PC-9 (cell line): ENCODE measurements at regions of chr11 and their contacts with region 1.

Region 1: DNA sequence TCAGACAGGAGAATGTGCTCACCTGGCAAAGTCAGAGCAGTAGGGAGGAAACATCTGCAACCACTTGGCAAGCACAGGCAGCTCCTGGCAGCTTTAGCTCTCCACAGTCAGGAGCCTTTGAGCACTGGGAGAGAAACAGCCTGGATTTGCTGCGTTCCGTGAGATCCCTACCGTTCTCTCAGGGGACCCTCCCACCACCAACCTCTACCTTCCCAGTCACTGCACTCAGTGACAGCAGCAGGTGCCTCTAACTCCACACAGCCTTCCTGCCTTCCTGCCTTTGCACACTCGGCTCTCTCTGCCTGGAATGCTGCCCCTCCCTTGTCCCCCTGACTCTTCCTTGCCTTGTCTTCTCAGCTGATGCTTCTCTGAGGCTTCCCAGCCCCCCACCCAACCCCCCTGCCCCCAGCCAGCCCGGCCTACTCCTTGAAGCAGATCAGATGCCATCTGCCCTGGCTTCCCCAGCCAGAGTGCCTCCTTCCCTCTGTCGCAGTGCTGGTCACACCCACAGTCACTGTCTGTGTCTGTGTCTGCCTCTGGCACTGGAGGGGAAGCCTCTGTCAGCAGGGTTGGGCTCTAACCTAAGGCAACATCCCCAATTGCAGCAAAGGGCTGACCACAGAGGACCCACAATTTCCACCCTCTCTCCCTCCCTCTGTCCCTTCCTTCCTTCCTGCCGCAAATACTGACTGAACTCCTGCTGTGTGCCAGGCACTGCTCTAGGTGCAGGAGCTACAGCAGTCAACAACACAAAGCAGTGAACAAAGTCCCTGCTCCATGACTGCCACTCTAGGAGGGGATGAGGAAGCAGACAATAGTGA is 14.9 kb upstream of the TSKU start:
- DNase-seq: peak in 1 of 2 experiments; percentile 57
- H3K4me3 ChIP-seq: peak overlapping the region; percentile 69
- H3K27ac ChIP-seq: peak overlapping the region; percentile 99
- H3K4me1 ChIP-seq: peaks cover 83% of the 10 kb centered on the region
- H3K27me3 ChIP-seq: no peaks in the 10 kb centered on the region
- CTCF ChIP-seq: no peak

Region 2: GRCh38 chr11:76782526-76783293 is 14.4 kb after region 1 on chr11:
- CTCF ChIA-PET with region 1: interaction called, 5 read pairs
- POLR2A ChIA-PET with region 1: interaction called, 24 read pairs
- intact Hi-C with region 1: loop called (anchors 1 kb)
- DNase-seq: peak; percentile 77 to 94
- H3K4me3 ChIP-seq: peak overlapping the region; percentile 94
- H3K27ac ChIP-seq: peak overlapping the region; percentile 85
- H3K4me1 ChIP-seq: peaks cover 40% of the 10 kb centered on the region
- H3K27me3 ChIP-seq: no peaks in the 10 kb centered on the region
- CTCF ChIP-seq: no peak

Region 3: DNA sequence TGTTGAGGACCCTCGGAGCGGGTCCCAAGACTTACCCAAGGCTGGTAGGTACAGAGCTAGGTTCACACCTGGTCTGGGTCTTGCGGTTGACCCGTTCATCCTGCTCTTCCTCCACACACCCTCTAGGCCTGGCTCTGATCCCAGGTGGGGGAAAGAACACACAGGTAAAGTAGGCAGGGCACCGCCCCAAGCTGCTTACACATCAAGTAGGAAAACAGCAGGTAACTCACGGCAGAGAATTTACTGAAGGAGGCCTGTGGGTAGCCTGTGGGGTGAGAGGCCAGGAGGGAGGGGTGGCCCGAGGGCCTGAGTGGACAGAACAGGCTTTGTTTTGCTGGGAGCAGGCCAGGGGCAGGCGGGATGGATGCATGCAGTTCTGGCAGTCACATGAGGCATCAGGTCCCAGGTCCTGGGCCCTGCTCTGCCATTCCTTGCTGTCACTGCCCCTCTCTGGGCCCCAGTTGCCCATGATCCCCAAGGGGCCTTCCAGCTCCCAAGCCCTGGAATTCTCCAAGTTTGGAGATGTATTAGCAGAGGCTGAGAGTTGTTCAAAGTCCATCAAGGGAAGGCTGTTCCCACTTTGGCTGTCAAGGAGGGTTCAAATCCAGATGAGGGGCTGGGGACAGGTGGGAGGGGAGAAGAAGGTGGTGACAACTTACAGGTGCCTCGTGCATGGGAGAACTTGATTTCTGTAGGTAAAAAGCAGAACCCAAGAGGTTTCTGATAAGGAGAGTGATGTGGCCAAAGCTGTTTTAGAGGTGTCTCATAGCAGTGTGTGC is 20.6 kb after region 1 on chr11:
- CTCF ChIA-PET with region 1: interaction called, 5 read pairs
- POLR2A ChIA-PET with region 1: interaction called, 21 read pairs
- intact Hi-C with region 1: no loop called
- DNase-seq: peak; percentile 98 to 100
- H3K4me3 ChIP-seq: peak overlapping the region; percentile 94; the same call in 1 of the 2 replicates
- H3K27ac ChIP-seq: peak overlapping the region; percentile 85
- H3K4me1 ChIP-seq: peaks cover 85% of the 10 kb centered on the region
- H3K27me3 ChIP-seq: no peaks in the 10 kb centered on the region
- CTCF ChIP-seq: no peak

Region 4: GRCh38 chr11:76799066-76799804 is 30.9 kb after region 1 on chr11:
- CTCF ChIA-PET with region 1: interaction called, 8 read pairs
- POLR2A ChIA-PET with region 1: interaction called, 3 read pairs
- intact Hi-C with region 1: loop called (anchors 2 kb)
- DNase-seq: peak in 1 of 2 experiments; percentile 89
- H3K4me3 ChIP-seq: no peak overlapping the region
- H3K27ac ChIP-seq: no peak overlapping the region
- H3K4me1 ChIP-seq: peaks cover 39% of the 10 kb centered on the region
- H3K27me3 ChIP-seq: no peaks in the 10 kb centered on the region
- CTCF ChIP-seq: peak; percentile 43

Region 5: DNA sequence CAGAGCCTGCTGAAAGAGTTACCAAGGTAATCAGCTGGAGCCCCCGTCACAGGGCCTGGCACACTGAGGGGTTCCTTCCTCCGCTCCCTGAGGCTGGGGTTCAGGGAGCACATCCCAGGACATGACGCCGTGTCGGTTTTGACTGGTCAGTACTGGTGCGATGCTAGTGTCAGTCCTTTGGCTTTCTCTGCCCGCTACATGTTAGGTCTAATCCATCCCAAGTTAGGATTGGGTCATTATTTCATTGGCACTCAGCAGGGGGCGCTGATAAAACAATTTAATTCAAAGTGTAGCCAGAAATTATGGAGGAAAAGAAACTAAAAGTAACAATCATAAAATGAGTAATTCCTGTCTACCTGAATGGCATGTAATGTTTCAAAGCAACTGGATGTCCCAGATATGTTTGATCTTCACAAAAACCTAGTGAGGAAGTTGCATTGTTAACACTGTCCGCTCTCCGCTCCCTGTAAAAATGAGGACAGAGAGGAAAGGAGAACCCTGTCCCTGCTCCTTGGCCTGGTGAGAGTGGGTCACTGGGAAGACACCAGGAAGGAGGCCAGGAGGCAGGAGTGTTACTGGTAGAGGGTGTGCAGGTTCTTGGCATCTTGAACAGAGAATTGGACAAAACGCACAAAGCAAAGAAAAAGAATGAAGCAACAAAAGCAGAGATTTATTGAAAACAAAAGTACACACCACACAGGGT is 42.0 kb after region 1 on chr11:
- CTCF ChIA-PET with region 1: no interaction called
- POLR2A ChIA-PET with region 1: no interaction called
- intact Hi-C with region 1: no loop called
- DNase-seq: no peak
- H3K4me3 ChIP-seq: no peak overlapping the region
- H3K27ac ChIP-seq: no peak overlapping the region
- H3K4me1 ChIP-seq: no peaks in the 10 kb centered on the region
- H3K27me3 ChIP-seq: no peaks in the 10 kb centered on the region
- CTCF ChIP-seq: peak; percentile 83